AG04450 (cell line): ENCODE measurements at regions of chr1 and their contacts with region 1.

Region 1: GRCh38 chr1:152047730-152048402 is 11.1 kb upstream of the S100A11 start:
- DNase-seq: peak; percentile 97
- H3K4me3 ChIP-seq: peak overlapping the region; percentile 50
- H3K27ac ChIP-seq: peak overlapping the region; percentile 99
- H3K27me3 ChIP-seq: peaks cover 3% of the 10 kb centered on the region
- CTCF ChIP-seq: peak; percentile 75

Region 2: GRCh38 chr1:152034646-152035405 is 13.0 kb before region 1 on chr1:
- CTCF ChIA-PET with region 1: interaction called, 15 read pairs
- POLR2A ChIA-PET with region 1: interaction called, 21 read pairs
- DNase-seq: no peak
- H3K4me3 ChIP-seq: peak overlapping the region; percentile 74
- H3K27ac ChIP-seq: peak overlapping the region; percentile 78
- H3K27me3 ChIP-seq: no peaks in the 10 kb centered on the region
- CTCF ChIP-seq: peak; percentile 71

Region 3: GRCh38 chr1:152347116-152347728 is 299.4 kb after region 1 on chr1:
- CTCF ChIA-PET with region 1: interaction called, 15 read pairs
- POLR2A ChIA-PET with region 1: no interaction called
- DNase-seq: peak; percentile 3
- H3K4me3 ChIP-seq: no peak overlapping the region
- H3K27ac ChIP-seq: no peak overlapping the region
- H3K27me3 ChIP-seq: no peaks in the 10 kb centered on the region
- CTCF ChIP-seq: peak; percentile 86